ENCODE measurements at regions of chr14 and their contacts with region 1.

Region 1: GRCh38 chr14:52179141-52179790 is 88.2 kb upstream of the PTGDR start:
- DNase-seq: no peak
- ATAC-seq: no peak
- H3K4me3 ChIP-seq: no peak overlapping the region
- H3K27ac ChIP-seq: no peak overlapping the region
- H3K4me1 ChIP-seq: no peaks in the 10 kb centered on the region
- CTCF ChIP-seq: no peak
- EP300 ChIP-seq: no peak
- POLR2A ChIP-seq: no peak
- RAD21 ChIP-seq: no peak

Region 2: GRCh38 chr14:51432302-51432948 is 746.8 kb before region 1 on chr14:
- CTCF ChIA-PET with region 1: no interaction called
- POLR2A ChIA-PET with region 1: no interaction called
- DNase-seq: no peak
- ATAC-seq: no peak
- H3K4me3 ChIP-seq: no peak overlapping the region
- H3K27ac ChIP-seq: no peak overlapping the region
- H3K4me1 ChIP-seq: peaks cover 7% of the 10 kb centered on the region; the same call in 2 of the 3 replicates
- CTCF ChIP-seq: no peak
- EP300 ChIP-seq: no peak
- POLR2A ChIP-seq: no peak
- RAD21 ChIP-seq: no peak

Region 3: GRCh38 chr14:52080817-52081755 is 98.2 kb before region 1 on chr14:
- CTCF ChIA-PET with region 1: no interaction called
- POLR2A ChIA-PET with region 1: no interaction called
- DNase-seq: peak; percentile 14 to 39
- ATAC-seq: peak; percentile 83 to 85; a peak in 5 of 6 replicates
- H3K4me3 ChIP-seq: no peak overlapping the region
- H3K27ac ChIP-seq: peak overlapping the region; percentile 50 to 53
- H3K4me1 ChIP-seq: peaks cover 40% of the 10 kb centered on the region
- CTCF ChIP-seq: no peak
- EP300 ChIP-seq: no peak
- POLR2A ChIP-seq: no peak
- RAD21 ChIP-seq: no peak

Region 4: GRCh38 chr14:52091928-52092327 is 87.3 kb before region 1 on chr14:
- CTCF ChIA-PET with region 1: no interaction called
- POLR2A ChIA-PET with region 1: no interaction called
- DNase-seq: no peak
- ATAC-seq: no peak
- H3K4me3 ChIP-seq: no peak overlapping the region
- H3K27ac ChIP-seq: no peak overlapping the region
- H3K4me1 ChIP-seq: no peaks in the 10 kb centered on the region
- CTCF ChIP-seq: no peak
- EP300 ChIP-seq: no peak
- POLR2A ChIP-seq: no peak
- RAD21 ChIP-seq: no peak

Region 5: DNA sequence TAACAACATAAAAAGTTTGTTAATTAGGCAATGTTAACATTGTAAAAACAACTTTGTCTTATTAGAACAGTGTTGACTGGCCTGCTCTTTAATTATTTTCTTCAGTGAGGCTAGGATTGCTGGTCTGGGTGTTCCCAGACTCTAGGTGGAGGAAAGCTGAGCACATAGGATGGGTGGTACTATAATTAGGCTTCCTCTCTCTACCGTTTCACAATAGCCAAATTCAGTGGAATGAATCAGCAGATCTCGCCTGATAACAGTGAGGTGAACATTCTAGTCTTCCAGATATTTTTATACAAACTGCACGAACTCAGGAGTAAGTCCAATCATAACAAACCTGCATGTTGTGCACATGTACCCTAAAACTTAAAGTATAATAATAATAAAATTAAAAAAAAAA is 100.1 kb after region 1 on chr14:
- CTCF ChIA-PET with region 1: no interaction called
- POLR2A ChIA-PET with region 1: no interaction called
- DNase-seq: peak; percentile 12 to 55
- ATAC-seq: peak in 1 of 2 experiments; percentile 67; a peak in 3 of 6 replicates
- H3K4me3 ChIP-seq: no peak overlapping the region
- H3K27ac ChIP-seq: peak overlapping the region; percentile 10 to 69; a peak in 4 of 6 replicates
- H3K4me1 ChIP-seq: peaks cover 9% of the 10 kb centered on the region; the same call in 1 of the 3 replicates
- CTCF ChIP-seq: no peak
- EP300 ChIP-seq: no peak
- POLR2A ChIP-seq: no peak
- RAD21 ChIP-seq: no peak

Region 6: DNA sequence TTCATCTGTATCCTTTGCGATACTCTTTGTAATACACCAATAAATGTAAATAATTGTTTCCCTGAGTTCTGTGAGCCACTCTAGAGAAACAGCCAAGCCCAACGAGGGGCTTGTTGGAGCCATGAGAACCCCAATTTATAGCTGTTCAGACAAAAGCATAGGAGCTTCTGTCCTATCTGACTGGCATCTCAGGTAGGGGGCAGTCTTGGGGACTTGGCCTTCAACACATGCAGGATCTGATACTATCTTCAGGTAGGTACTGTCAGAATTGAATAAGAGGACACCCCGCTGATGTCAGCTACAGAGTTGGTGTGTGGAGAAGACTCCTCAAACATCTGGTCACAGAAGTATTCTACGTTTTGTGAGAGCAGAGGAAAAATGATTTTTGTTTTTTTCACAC is 347.8 kb after region 1 on chr14:
- CTCF ChIA-PET with region 1: no interaction called
- POLR2A ChIA-PET with region 1: interaction called, 10 read pairs
- DNase-seq: no peak
- ATAC-seq: no peak; a peak in 1 of 6 replicates
- H3K4me3 ChIP-seq: no peak overlapping the region
- H3K27ac ChIP-seq: no peak overlapping the region
- H3K4me1 ChIP-seq: no peaks in the 10 kb centered on the region
- CTCF ChIP-seq: no peak
- EP300 ChIP-seq: no peak
- POLR2A ChIP-seq: no peak
- RAD21 ChIP-seq: no peak